ENCODE measurements at regions of chr6 and their contacts with region 1.

Region 1: GRCh38 chr6:36027501-36028087 is at the start of gene MAPK14:
- DNase-seq: peak; percentile 97 to 100 (median 98)
- ATAC-seq: peak; percentile 91
- H3K4me3 ChIP-seq: peak within 1 kb of the TSS; percentile 92
- H3K27ac ChIP-seq: peak within 1 kb of the TSS; percentile 73
- H3K4me1 ChIP-seq: peaks cover 26 to 39% of the 10 kb centered on the region in 2 experiments
- H3K27me3 ChIP-seq: no peaks in the 10 kb centered on the region
- CTCF ChIP-seq: peak; percentile 95 to 98 (median 97)
- EP300 ChIP-seq: no peak
- POLR2A ChIP-seq: peak; percentile 96
- RAD21 ChIP-seq: peak; percentile 97 to 99
- polyA plus RNA-seq, gene MAPK14: 8.8 to 11.8 TPM

Region 2: GRCh38 chr6:35678021-35678654 is 349.5 kb before region 1 on chr6:
- CTCF ChIA-PET with region 1: no interaction called
- POLR2A ChIA-PET with region 1: no interaction called
- in situ Hi-C with region 1: no loop called
- intact Hi-C with region 1: no loop called
- DNase-seq: no peak
- ATAC-seq: no peak
- H3K4me3 ChIP-seq: no peak overlapping the region
- H3K27ac ChIP-seq: no peak overlapping the region; the same call in 2 of the 3 replicates
- H3K4me1 ChIP-seq: 0 out of 5 replicates have a peak, but pooled peaks cover 0 to 6% of the 10 kb centered on the region in 2 experiments
- H3K27me3 ChIP-seq: no peaks in the 10 kb centered on the region
- CTCF ChIP-seq: no peak
- EP300 ChIP-seq: no peak
- POLR2A ChIP-seq: no peak
- RAD21 ChIP-seq: no peak

Region 3: DNA sequence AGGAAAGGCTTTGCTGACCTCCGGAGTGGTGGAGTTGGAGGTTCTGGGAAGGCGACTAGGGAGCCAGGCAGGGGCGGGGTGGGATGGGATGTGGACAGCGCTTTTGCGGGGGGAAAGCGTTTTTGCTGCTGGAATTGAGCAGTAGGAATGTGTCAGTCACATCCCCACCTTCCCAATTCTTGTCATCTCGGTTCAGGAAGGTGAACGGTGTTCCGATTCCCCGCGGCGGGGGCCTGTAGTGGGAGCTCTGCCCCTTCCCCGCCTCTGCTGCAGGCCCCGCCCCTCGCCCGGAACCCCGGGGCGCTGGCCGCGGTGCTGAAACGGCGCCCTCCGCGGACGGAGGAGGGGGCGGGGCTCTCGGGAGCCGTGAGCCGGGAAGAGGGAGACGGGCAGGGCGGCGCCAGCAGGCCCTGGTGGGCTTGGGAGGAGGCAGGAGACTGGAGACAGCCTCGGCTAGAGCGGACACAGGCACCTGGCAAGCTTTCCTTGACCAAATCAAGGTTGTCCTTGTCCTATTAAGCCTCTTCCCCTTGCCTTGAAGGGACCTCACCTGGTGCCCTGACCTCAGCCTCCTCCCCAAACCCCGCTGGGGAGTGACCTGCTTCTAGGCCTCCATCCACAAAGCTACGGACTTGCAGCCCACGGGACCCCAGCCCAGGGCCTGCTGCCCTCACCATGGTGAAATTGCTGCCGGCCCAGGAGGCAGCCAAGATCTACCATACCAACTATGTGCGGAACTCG is 222.4 kb before region 1 on chr6 and contains the start of gene LHFPL5:
- CTCF ChIA-PET with region 1: no interaction called
- POLR2A ChIA-PET with region 1: no interaction called
- in situ Hi-C with region 1: no loop called
- intact Hi-C with region 1: no loop called
- DNase-seq: peak; percentile 77 to 99 (median 97)
- ATAC-seq: peak; percentile 100
- H3K4me3 ChIP-seq: no peak within 1 kb of the TSS; the same call in 1 of the 2 replicates
- H3K27ac ChIP-seq: no peak within 1 kb of the TSS
- H3K4me1 ChIP-seq: peaks cover 5 to 10% of the 10 kb centered on the region in 2 experiments
- H3K27me3 ChIP-seq: peaks cover 15 to 28% of the 10 kb centered on the region in 2 experiments
- CTCF ChIP-seq: no peak
- EP300 ChIP-seq: no peak
- POLR2A ChIP-seq: no peak
- RAD21 ChIP-seq: no peak; a peak in 1 of 4 replicates
- polyA plus RNA-seq, gene LHFPL5: not detected

Region 4: DNA sequence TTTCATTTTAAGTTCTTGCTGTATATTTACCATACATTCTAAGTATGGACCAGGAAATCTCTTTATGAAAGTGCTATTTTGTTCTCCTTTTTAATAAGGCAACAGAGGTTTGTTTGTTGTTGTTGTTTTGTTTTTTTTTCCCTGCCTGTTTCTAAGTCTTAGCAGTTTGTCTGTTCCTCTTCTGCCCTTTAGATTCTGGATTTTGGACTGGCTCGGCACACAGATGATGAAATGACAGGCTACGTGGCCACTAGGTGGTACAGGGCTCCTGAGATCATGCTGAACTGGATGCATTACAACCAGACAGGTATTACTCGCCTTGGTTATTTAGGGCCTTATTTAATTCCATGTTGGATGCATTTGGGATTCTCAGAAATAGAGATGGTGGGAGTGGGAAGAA is 48.1 kb after region 1 on chr6:
- CTCF ChIA-PET with region 1: no interaction called
- POLR2A ChIA-PET with region 1: interaction called, 3 read pairs
- in situ Hi-C with region 1: no loop called
- intact Hi-C with region 1: loop called (anchors 5 kb)
- DNase-seq: peak; percentile 46 to 56 (median 52)
- ATAC-seq: peak; percentile 96
- H3K4me3 ChIP-seq: no peak overlapping the region
- H3K27ac ChIP-seq: no peak overlapping the region
- H3K4me1 ChIP-seq: peaks cover 4 to 13% of the 10 kb centered on the region in 2 experiments; a peak in 3 of 5 replicates
- H3K27me3 ChIP-seq: no peaks in the 10 kb centered on the region
- CTCF ChIP-seq: peak; percentile 52 to 66 (median 64); a peak in 5 of 6 replicates
- EP300 ChIP-seq: no peak
- POLR2A ChIP-seq: no peak
- RAD21 ChIP-seq: peak in 1 of 2 experiments; percentile 47; a peak in 2 of 4 replicates

Region 5: DNA sequence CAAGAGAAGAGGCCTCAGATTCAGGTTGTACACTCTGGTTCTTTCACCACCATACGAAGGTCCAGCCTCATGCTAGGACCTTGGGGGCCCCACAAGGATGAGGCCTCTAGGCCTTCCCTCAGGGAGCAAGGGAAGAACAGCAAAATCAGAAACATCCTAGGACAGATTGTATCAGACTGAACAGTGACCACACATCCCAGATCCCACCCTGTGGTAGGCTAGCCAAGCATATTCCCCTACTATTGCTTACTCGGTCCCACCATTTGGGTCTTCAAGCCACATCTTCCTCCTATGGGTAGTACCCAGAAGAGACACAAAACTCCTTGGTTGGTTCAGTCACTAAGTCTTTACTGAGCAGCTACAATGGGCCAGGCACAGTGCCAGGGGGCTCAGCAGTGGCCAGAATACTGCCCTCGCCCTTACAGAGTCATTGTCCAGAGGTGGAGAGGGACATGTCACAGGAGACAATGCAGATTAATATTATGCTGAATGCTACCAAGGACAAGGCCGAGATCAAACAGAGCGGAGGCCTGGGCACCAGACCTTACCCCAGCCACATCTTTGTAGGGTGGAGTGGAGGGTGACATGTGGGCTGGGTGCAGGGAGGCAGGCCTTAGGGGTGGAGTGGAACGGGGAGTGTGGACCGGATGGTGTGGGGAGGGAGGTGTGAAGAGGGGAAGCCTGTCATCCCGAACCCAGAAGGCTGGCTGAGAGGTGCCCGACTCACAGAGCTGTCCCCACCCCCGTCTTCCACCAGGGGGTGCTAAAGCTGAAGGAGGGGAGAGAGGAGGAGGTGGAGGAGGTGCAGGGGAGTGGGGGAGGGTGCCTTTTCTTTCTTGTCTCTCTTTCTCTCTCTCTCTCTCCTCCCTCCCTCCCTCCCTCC is 95.9 kb after region 1 on chr6:
- CTCF ChIA-PET with region 1: interaction called, 3 read pairs
- POLR2A ChIA-PET with region 1: interaction called, 7 read pairs
- in situ Hi-C with region 1: no loop called
- intact Hi-C with region 1: loop called (anchors 1 kb)
- DNase-seq: peak; percentile 92 to 95 (median 94)
- ATAC-seq: peak; percentile 87
- H3K4me3 ChIP-seq: no peak overlapping the region
- H3K27ac ChIP-seq: 0 out of 3 replicates have a peak overlapping the region, but pooled peaks have one; percentile 2
- H3K4me1 ChIP-seq: peaks cover 55 to 69% of the 10 kb centered on the region in 2 experiments
- H3K27me3 ChIP-seq: no peaks in the 10 kb centered on the region
- CTCF ChIP-seq: peak; percentile 79 to 92 (median 92)
- EP300 ChIP-seq: peak; percentile 40; the same call in 1 of the 2 replicates
- POLR2A ChIP-seq: no peak
- RAD21 ChIP-seq: peak; percentile 74 to 90

Region 6: DNA sequence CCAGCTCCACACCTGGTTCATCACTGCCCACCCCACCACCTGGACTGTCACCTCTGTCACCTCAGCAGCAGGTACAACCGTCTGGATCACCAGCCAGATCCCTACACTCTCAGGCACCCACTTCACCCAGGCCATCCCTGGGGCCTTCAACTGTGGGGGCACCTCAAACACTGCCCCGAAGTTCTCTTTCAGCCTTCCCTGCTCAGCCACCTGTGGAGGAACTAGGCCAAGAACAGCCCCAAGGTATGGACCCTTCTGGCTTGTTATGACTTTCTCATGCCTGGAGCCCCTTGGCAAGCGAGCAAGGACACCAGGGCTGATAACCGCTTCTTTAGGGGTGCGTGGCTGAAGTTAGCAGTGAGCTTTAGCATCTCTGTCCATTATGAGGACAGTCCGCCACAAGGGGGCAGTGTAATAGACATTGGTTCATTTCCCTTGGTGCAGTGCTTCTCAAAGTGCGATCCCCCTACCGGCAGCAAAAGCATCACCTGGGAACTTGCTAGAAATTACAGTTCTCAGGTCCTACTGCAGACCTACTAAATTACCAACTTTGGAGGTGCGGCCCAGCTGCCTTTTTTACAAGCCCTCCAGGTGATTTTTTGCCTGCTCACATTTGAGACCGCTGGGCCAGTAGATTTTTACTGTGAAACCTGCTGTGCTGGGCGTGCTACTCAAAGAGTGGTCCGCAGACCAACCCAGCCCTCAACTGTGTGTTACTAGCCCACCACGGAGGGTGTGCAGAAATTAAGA is 274.8 kb after region 1 on chr6:
- CTCF ChIA-PET with region 1: no interaction called
- POLR2A ChIA-PET with region 1: no interaction called
- in situ Hi-C with region 1: no loop called
- intact Hi-C with region 1: loop called (anchors 1 kb)
- DNase-seq: peak; percentile 85 to 97 (median 88)
- ATAC-seq: peak; percentile 98
- H3K4me3 ChIP-seq: no peak overlapping the region
- H3K27ac ChIP-seq: no peak overlapping the region
- H3K4me1 ChIP-seq: no peaks in the 10 kb centered on the region
- H3K27me3 ChIP-seq: peaks cover 35 to 57% of the 10 kb centered on the region in 2 experiments
- CTCF ChIP-seq: peak; percentile 99
- EP300 ChIP-seq: peak; percentile 24; the same call in 1 of the 2 replicates
- POLR2A ChIP-seq: no peak
- RAD21 ChIP-seq: peak; percentile 84 to 92

Measured in K562 (cell line).